ENCODE measurements at regions of chr3 and their contacts with region 1.

Region 1: GRCh38 chr3:111717601-111718000 is 122.5 kb upstream of the ZBED2 start:
- DNase-seq: peak; percentile 27
- ATAC-seq: peak; percentile 96
- H3K4me3 Mint-ChIP-seq: no peak overlapping the region
- H3K27ac Mint-ChIP-seq: no peak overlapping the region
- H3K4me1 Mint-ChIP-seq: peaks cover under 1% of the 10 kb centered on the region
- H3K27me3 Mint-ChIP-seq: no peaks in the 10 kb centered on the region
- CTCF ChIP-seq: no peak

Region 2: GRCh38 chr3:111577794-111578685 is 139.6 kb before region 1 on chr3:
- CTCF ChIA-PET with region 1: interaction called, 21 read pairs
- POLR2A ChIA-PET with region 1: no interaction called
- intact Hi-C with region 1: loop called (anchors 1 kb)
- DNase-seq: no peak
- ATAC-seq: peak; percentile 93
- H3K4me3 Mint-ChIP-seq: no peak overlapping the region
- H3K27ac Mint-ChIP-seq: peak overlapping the region; percentile 64
- H3K4me1 Mint-ChIP-seq: peaks cover 33% of the 10 kb centered on the region
- H3K27me3 Mint-ChIP-seq: no peaks in the 10 kb centered on the region
- CTCF ChIP-seq: no peak

Region 3: DNA sequence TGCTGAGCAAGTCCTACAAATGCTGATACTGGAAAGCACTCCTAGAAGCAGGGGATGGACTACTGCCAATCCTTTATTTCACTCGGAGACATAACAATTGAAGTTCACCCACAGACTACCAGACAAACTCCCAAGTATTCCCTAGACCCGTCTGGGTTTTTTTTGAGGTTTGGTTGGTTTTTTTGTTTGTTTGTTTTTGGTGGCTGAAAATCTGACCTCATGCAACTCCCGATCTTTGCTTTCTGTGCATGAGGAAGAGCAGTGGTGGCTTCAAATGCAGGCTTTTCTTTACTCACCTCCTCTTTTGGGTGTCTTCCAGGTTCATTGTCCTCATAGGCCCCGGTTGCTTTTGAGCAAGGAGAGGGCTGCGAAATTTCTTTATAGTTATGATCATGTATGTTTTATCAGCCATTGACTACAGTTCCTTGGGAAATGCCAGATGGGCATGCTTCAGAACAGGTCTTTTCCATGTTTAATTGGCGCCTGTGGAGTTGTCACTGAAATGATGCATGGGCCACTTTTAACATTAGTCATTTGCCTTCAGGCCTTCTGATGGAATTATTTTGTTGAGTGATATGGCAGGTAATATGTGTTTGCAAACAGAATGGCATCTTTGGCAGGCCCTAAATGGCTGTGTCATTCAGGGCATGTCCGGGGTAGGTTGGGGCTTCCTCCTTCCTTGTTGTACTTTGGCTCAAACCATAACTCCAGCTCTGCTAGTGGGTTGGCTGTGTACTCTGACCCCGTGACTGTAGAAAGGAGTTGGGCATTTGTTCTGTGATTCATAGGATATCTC is 41.2 kb before region 1 on chr3:
- CTCF ChIA-PET with region 1: interaction called, 11 read pairs
- POLR2A ChIA-PET with region 1: no interaction called
- intact Hi-C with region 1: no loop called
- DNase-seq: no peak
- ATAC-seq: no peak
- H3K4me3 Mint-ChIP-seq: peak overlapping the region; percentile 100
- H3K27ac Mint-ChIP-seq: peak overlapping the region; percentile 64
- H3K4me1 Mint-ChIP-seq: peaks cover 58% of the 10 kb centered on the region
- H3K27me3 Mint-ChIP-seq: no peaks in the 10 kb centered on the region
- CTCF ChIP-seq: no peak

Region 4: DNA sequence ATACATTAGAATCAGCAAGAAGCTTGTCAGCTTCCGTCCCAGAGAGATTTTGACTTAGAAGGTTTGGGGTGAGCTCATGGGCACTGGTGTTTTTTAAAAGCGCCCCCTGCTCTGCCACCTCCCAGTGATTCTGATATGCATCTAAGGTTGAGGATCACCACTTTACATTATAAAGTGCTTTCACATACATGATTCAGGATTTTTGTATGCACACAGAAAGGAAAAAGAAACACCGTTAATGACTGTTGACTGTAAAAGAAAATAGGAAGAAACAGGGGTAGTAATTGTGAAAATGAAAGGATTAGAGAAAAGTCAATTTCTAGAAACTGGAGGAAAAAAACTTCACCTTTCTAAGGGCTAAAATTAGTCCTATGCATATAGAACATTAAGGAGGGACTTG is 17.5 kb before region 1 on chr3:
- CTCF ChIA-PET with region 1: interaction called, 11 read pairs
- POLR2A ChIA-PET with region 1: no interaction called
- intact Hi-C with region 1: loop called (anchors 2 kb)
- DNase-seq: no peak
- ATAC-seq: no peak
- H3K4me3 Mint-ChIP-seq: peak overlapping the region; percentile 36
- H3K27ac Mint-ChIP-seq: no peak overlapping the region
- H3K4me1 Mint-ChIP-seq: peaks cover 24% of the 10 kb centered on the region
- H3K27me3 Mint-ChIP-seq: no peaks in the 10 kb centered on the region
- CTCF ChIP-seq: no peak

Region 5: DNA sequence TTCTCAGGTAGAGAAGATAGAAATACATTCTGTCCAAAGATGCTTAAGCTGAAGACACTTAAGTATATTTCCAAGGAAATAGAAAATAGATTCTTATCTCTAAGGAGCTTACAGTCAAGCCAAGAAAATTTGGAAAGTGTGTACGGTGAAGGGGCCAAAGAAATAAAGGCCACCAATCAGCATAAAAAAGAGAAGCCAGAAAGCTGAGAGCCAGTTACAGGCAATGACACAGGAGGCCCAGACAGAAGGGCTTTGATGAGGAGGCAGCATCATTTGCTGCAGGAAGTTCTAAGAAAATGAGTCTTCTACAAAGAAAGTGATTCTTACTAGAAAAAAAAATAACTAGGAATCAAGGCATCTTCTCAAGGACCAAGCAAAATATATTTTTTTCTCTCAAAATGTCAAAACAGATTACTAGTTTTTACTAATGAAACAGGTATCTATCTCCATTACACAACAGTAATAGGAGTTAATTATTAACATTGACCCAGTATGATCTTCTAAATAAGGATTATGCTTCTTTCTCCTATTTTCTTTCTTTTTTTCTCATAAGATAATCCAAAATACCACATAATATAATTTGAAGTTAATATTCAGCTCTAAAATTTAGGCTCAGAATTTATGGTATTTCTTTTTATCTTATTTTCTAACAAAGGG is 59.4 kb after region 1 on chr3:
- CTCF ChIA-PET with region 1: no interaction called
- POLR2A ChIA-PET with region 1: no interaction called
- intact Hi-C with region 1: no loop called
- DNase-seq: no peak
- ATAC-seq: no peak
- H3K4me3 Mint-ChIP-seq: no peak overlapping the region
- H3K27ac Mint-ChIP-seq: no peak overlapping the region
- H3K4me1 Mint-ChIP-seq: no peaks in the 10 kb centered on the region
- H3K27me3 Mint-ChIP-seq: no peaks in the 10 kb centered on the region
- CTCF ChIP-seq: no peak

Region 6: GRCh38 chr3:111910806-111911205 is 193.2 kb after region 1 on chr3:
- CTCF ChIA-PET with region 1: no interaction called
- POLR2A ChIA-PET with region 1: no interaction called
- intact Hi-C with region 1: no loop called
- DNase-seq: no peak
- ATAC-seq: no peak
- H3K4me3 Mint-ChIP-seq: no peak overlapping the region
- H3K27ac Mint-ChIP-seq: no peak overlapping the region
- H3K4me1 Mint-ChIP-seq: no peaks in the 10 kb centered on the region
- H3K27me3 Mint-ChIP-seq: no peaks in the 10 kb centered on the region
- CTCF ChIP-seq: no peak

Region 7: GRCh38 chr3:111967651-111968274 is 250.2 kb after region 1 on chr3:
- CTCF ChIA-PET with region 1: interaction called, 263 read pairs
- POLR2A ChIA-PET with region 1: no interaction called
- intact Hi-C with region 1: loop called (anchors 1 kb)
- DNase-seq: peak; percentile 39
- ATAC-seq: peak; percentile 90
- H3K4me3 Mint-ChIP-seq: peak overlapping the region; percentile 4
- H3K27ac Mint-ChIP-seq: no peak overlapping the region
- H3K4me1 Mint-ChIP-seq: peaks cover 5% of the 10 kb centered on the region
- H3K27me3 Mint-ChIP-seq: no peaks in the 10 kb centered on the region
- CTCF ChIP-seq: peak; percentile 97

Region 8: DNA sequence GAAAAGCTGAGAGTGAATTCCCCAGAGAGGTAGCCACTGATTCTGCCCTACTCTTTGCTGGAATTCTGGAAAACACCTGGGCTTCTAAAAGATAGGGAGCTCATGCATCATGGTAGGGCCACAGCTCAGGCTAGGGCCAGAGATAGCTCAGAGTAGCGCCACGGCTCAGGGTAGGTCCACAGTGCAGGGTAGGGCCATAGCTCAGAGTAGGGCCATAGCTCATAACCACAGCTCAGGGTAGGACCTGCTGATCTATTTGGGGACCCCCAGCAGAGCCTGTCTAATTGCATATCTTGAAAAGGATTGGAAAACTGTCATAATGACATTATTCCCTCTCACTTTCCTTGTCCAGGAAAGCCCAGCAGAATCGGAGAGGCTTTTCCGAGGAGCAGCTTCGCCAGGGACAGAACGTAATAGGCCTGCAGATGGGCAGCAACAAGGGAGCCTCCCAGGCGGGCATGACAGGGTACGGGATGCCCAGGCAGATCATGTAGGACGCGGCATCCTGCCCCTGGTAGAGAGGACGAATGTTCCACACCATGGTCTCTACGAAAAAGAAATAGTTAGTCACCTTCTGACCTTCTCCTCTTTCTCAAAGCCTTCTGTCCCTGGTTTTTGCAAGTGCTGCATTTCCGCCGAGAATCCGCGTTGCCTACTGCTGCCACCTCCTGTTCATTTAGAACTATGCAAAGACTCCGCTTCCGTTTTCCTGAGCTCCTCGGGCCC is 295.6 kb after region 1 on chr3:
- CTCF ChIA-PET with region 1: interaction called, 48 read pairs
- POLR2A ChIA-PET with region 1: interaction called, 3 read pairs
- intact Hi-C with region 1: loop called (anchors 1 kb)
- DNase-seq: peak; percentile 21
- ATAC-seq: peak; percentile 82
- H3K4me3 Mint-ChIP-seq: peak overlapping the region; percentile 21
- H3K27ac Mint-ChIP-seq: no peak overlapping the region
- H3K4me1 Mint-ChIP-seq: peaks cover 16% of the 10 kb centered on the region
- H3K27me3 Mint-ChIP-seq: no peaks in the 10 kb centered on the region
- CTCF ChIP-seq: no peak